Esophagus squamous epithelium (tissue), 5 donors: ENCODE measurements at regions of chr3 and their contacts with region 1.

Region 1: GRCh38 chr3:124928333-124929202 is 6.0 kb downstream of the MUC13 start:
- DNase-seq: no peak
- H3K4me3 ChIP-seq: no peak overlapping the region
- H3K27ac ChIP-seq: no peak overlapping the region
- H3K4me1 ChIP-seq: no peaks in the 10 kb centered on the region
- H3K27me3 ChIP-seq: no peaks in the 10 kb centered on the region
- CTCF ChIP-seq: peak; percentile 34 to 80 (median 75)
- POLR2A ChIP-seq: no peak

Region 2: GRCh38 chr3:124826703-124827102 is 101.9 kb before region 1 on chr3:
- intact Hi-C with region 1: no loop called
- DNase-seq: no peak
- H3K4me3 ChIP-seq: no peak overlapping the region
- H3K27ac ChIP-seq: peak overlapping the region; percentile 68 to 84 (median 78)
- H3K4me1 ChIP-seq: peaks cover 8 to 66% (median 25%) of the 10 kb centered on the region in 3 donors
- H3K27me3 ChIP-seq: no peaks in the 10 kb centered on the region
- CTCF ChIP-seq: no peak
- POLR2A ChIP-seq: no peak

Region 3: GRCh38 chr3:124850633-124851032 is 77.9 kb before region 1 on chr3:
- intact Hi-C with region 1: no loop called
- DNase-seq: no peak
- H3K4me3 ChIP-seq: no peak overlapping the region
- H3K27ac ChIP-seq: peak overlapping the region in 3 of 4 donors; percentile 18 to 60 (median 50)
- H3K4me1 ChIP-seq: peaks cover 8 to 64% (median 16%) of the 10 kb centered on the region in 3 donors
- H3K27me3 ChIP-seq: no peaks in the 10 kb centered on the region
- CTCF ChIP-seq: no peak
- POLR2A ChIP-seq: no peak

Region 4: GRCh38 chr3:125003369-125003853 is 74.8 kb after region 1 on chr3:
- intact Hi-C with region 1: no loop called
- DNase-seq: no peak
- H3K4me3 ChIP-seq: no peak overlapping the region
- H3K27ac ChIP-seq: peak overlapping the region in 3 of 4 donors; percentile 59 to 63 (median 60)
- H3K4me1 ChIP-seq: peaks cover 30 to 64% (median 43%) of the 10 kb centered on the region in 3 donors
- H3K27me3 ChIP-seq: no peaks in the 10 kb centered on the region
- CTCF ChIP-seq: no peak
- POLR2A ChIP-seq: no peak

Region 5: GRCh38 chr3:125582711-125583110 is 654.1 kb after region 1 on chr3:
- intact Hi-C with region 1: loop called (anchors 5 kb)
- DNase-seq: no peak
- H3K4me3 ChIP-seq: no peak overlapping the region
- H3K27ac ChIP-seq: no peak overlapping the region
- H3K4me1 ChIP-seq: peaks cover 0 to 23% (median 3%) of the 10 kb centered on the region in 3 donors
- H3K27me3 ChIP-seq: no peaks in the 10 kb centered on the region
- CTCF ChIP-seq: peak in 1 of 6 experiments; percentile 10
- POLR2A ChIP-seq: no peak